ENCODE measurements at regions of chr6 and their contacts with region 1.

Region 1: DNA sequence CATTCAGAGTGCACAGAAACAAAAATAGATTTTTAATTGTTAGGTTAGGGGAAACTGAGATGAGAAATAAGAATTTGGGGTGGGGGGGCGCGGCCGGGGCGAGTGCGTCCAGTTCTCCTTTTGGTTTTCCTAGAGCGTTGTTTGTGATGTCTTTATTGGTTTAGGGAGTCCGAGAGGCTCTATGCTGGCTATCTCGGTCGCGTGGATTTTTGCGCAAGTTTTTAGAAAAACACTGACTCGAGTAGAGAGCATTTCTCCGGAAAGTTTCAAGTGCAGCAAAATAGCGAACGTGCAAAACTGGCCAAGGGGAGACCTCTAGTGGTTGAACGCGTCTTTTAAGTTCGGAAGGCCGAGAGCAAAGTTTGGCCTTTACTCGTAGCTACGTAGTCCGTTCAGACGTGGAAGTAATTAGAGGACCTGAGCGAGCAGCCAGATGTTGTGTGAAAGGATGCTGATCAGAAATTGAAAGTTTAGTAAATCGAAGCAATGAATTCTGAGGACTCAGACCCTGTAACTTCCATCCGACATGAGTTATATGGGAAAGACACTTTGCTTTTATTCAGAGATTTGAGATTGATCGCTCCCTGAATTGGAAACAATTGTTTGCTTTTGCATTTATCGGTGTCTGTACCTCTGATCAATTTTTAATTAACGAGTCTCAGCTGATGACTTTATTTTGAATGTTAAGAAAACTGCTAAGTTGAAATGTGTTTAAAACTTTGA is 2.7 kb downstream of the L3MBTL3 start:
- DNase-seq: peak; percentile 80 to 84 (median 84)
- H3K4me3 ChIP-seq: peak overlapping the region; percentile 80 to 91 (median 89)
- H3K4me3 Mint-ChIP-seq: peak overlapping the region; percentile 90 to 92
- H3K27ac ChIP-seq: peak overlapping the region; percentile 74 to 90
- H3K27ac Mint-ChIP-seq: peak overlapping the region; percentile 76 to 91 (median 87)
- H3K4me1 ChIP-seq: peaks cover 7 to 11% of the 10 kb centered on the region in 2 donors
- H3K4me1 Mint-ChIP-seq: peaks cover 8% of the 10 kb centered on the region
- H3K27me3 ChIP-seq: no peaks in the 10 kb centered on the region
- H3K27me3 Mint-ChIP-seq: peaks cover 0 to 2% (median 0%) of the 10 kb centered on the region in 3 donors
- CTCF ChIP-seq: peak; percentile 77

Region 2: GRCh38 chr6:129598244-129599187 is 422.6 kb before region 1 on chr6:
- intact Hi-C with region 1: loop called (anchors 5 kb)
- DNase-seq: peak; percentile 48 to 71 (median 60)
- H3K4me3 ChIP-seq: no peak overlapping the region
- H3K4me3 Mint-ChIP-seq: no peak overlapping the region
- H3K27ac ChIP-seq: no peak overlapping the region
- H3K27ac Mint-ChIP-seq: no peak overlapping the region
- H3K4me1 ChIP-seq: no peaks in the 10 kb centered on the region
- H3K4me1 Mint-ChIP-seq: no peaks in the 10 kb centered on the region
- H3K27me3 ChIP-seq: no peaks in the 10 kb centered on the region
- H3K27me3 Mint-ChIP-seq: peaks cover 0 to 2% (median 0%) of the 10 kb centered on the region in 3 donors
- CTCF ChIP-seq: peak; percentile 80

Region 3: GRCh38 chr6:129774697-129775447 is 246.2 kb before region 1 on chr6:
- intact Hi-C with region 1: loop called in 1 of 2 experiments (anchors 10 kb)
- DNase-seq: peak; percentile 38 to 59 (median 56)
- H3K4me3 ChIP-seq: no peak overlapping the region
- H3K4me3 Mint-ChIP-seq: no peak overlapping the region
- H3K27ac ChIP-seq: no peak overlapping the region
- H3K27ac Mint-ChIP-seq: no peak overlapping the region
- H3K4me1 ChIP-seq: no peaks in the 10 kb centered on the region
- H3K4me1 Mint-ChIP-seq: peaks cover 2% of the 10 kb centered on the region
- H3K27me3 ChIP-seq: no peaks in the 10 kb centered on the region
- H3K27me3 Mint-ChIP-seq: peaks cover 0 to 5% (median 5%) of the 10 kb centered on the region in 3 donors
- CTCF ChIP-seq: peak; percentile 92

Region 4: GRCh38 chr6:129893640-129894039 is 127.4 kb before region 1 on chr6:
- intact Hi-C with region 1: loop called in 1 of 2 experiments (anchors 5 kb)
- DNase-seq: peak in 2 of 3 donors; percentile 30 to 46
- H3K4me3 ChIP-seq: no peak overlapping the region
- H3K4me3 Mint-ChIP-seq: no peak overlapping the region
- H3K27ac ChIP-seq: no peak overlapping the region
- H3K27ac Mint-ChIP-seq: no peak overlapping the region
- H3K4me1 ChIP-seq: peaks cover 28 to 41% of the 10 kb centered on the region in 2 donors
- H3K4me1 Mint-ChIP-seq: peaks cover 28% of the 10 kb centered on the region
- H3K27me3 ChIP-seq: no peaks in the 10 kb centered on the region
- H3K27me3 Mint-ChIP-seq: peaks cover 0 to 2% (median 0%) of the 10 kb centered on the region in 3 donors
- CTCF ChIP-seq: peak; percentile 75